A673 (cell line): ENCODE measurements at regions of chr10 and their contacts with region 1.

Region 1: GRCh38 chr10:84205049-84205852 is 10.9 kb downstream of the CDHR1 start:
- DNase-seq: peak; percentile 71
- H3K4me3 ChIP-seq: no peak overlapping the region
- H3K27ac ChIP-seq: no peak overlapping the region
- H3K4me1 ChIP-seq: no peaks in the 10 kb centered on the region
- H3K27me3 ChIP-seq: peaks cover 18% of the 10 kb centered on the region
- CTCF ChIP-seq: peak; percentile 89

Region 2: DNA sequence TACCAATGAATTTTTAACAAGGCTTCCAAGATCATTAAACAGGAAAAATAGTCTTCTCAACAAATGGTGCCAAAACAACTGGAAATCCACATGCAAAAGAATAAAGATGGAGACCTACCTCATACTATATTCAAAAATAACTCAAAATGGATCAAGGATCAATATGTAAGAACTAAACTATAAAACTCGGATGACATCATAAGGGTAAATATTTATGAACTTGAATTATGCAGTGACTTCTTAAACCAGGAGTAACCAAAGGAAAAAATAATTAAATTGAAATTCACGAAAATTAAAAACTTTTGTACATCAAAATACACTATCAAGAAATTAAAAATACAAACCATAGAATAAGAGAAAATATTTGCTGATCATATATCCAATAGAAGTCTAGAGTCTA is 794.7 kb before region 1 on chr10:
- CTCF ChIA-PET with region 1: no interaction called
- POLR2A ChIA-PET with region 1: no interaction called
- intact Hi-C with region 1: no loop called
- DNase-seq: no peak
- H3K4me3 ChIP-seq: no peak overlapping the region
- H3K27ac ChIP-seq: no peak overlapping the region
- H3K4me1 ChIP-seq: no peaks in the 10 kb centered on the region
- H3K27me3 ChIP-seq: no peaks in the 10 kb centered on the region
- CTCF ChIP-seq: no peak

Region 3: DNA sequence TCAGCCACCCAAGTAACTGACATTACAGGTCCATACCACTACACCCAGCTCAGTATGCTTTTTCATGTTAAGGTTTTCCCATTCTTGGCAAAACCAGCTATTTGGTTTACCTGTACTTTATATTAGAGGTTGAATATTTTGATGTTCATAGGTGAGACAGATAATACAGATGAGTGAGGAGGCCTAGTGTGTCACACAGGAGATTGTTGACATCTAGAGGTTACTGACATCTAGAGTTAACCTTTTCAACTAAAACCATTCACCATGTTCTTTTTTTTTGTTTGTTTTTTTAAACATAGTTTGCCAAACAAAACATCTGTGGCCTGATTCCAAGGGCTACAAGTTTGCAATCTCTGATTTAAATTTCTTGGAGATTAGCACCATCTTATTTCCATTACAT is 57.9 kb before region 1 on chr10:
- CTCF ChIA-PET with region 1: no interaction called
- POLR2A ChIA-PET with region 1: no interaction called
- intact Hi-C with region 1: loop called (anchors 5 kb)
- DNase-seq: no peak
- H3K4me3 ChIP-seq: no peak overlapping the region
- H3K27ac ChIP-seq: no peak overlapping the region
- H3K4me1 ChIP-seq: no peaks in the 10 kb centered on the region
- H3K27me3 ChIP-seq: no peaks in the 10 kb centered on the region
- CTCF ChIP-seq: no peak